Psoas muscle (tissue), 8 donors: ENCODE measurements at regions of chrX and their contacts with region 1.

Region 1: GRCh38 chrX:8717354-8717753 is 14.6 kb downstream of the ANOS1 start:
- DNase-seq: no peak
- ATAC-seq: peak in 1 of 4 donors; percentile 21
- H3K4me3 ChIP-seq: no peak overlapping the region
- H3K27ac ChIP-seq: no peak overlapping the region
- H3K4me1 ChIP-seq: peaks cover 3% of the 10 kb centered on the region
- H3K27me3 ChIP-seq: no peaks in the 10 kb centered on the region
- CTCF ChIP-seq: no peak

Region 2: GRCh38 chrX:8679550-8679949 is 37.8 kb before region 1 on chrX:
- intact Hi-C with region 1: loop called in 1 of 2 experiments (anchors 5 kb)
- DNase-seq: no peak
- ATAC-seq: peak in 1 of 4 donors; percentile 48
- H3K4me3 ChIP-seq: no peak overlapping the region
- H3K27ac ChIP-seq: no peak overlapping the region
- H3K4me1 ChIP-seq: no peaks in the 10 kb centered on the region
- H3K27me3 ChIP-seq: no peaks in the 10 kb centered on the region
- CTCF ChIP-seq: no peak